ENCODE measurements at regions of chr1 and their contacts with region 1.

Region 1: GRCh38 chr1:204296431-204296988 is 63.2 kb downstream of the PLEKHA6 start:
- DNase-seq: no peak

Region 2: GRCh38 chr1:204059970-204060369 is 236.5 kb before region 1 on chr1:
- intact Hi-C with region 1: no loop called
- DNase-seq: no peak

Region 3: DNA sequence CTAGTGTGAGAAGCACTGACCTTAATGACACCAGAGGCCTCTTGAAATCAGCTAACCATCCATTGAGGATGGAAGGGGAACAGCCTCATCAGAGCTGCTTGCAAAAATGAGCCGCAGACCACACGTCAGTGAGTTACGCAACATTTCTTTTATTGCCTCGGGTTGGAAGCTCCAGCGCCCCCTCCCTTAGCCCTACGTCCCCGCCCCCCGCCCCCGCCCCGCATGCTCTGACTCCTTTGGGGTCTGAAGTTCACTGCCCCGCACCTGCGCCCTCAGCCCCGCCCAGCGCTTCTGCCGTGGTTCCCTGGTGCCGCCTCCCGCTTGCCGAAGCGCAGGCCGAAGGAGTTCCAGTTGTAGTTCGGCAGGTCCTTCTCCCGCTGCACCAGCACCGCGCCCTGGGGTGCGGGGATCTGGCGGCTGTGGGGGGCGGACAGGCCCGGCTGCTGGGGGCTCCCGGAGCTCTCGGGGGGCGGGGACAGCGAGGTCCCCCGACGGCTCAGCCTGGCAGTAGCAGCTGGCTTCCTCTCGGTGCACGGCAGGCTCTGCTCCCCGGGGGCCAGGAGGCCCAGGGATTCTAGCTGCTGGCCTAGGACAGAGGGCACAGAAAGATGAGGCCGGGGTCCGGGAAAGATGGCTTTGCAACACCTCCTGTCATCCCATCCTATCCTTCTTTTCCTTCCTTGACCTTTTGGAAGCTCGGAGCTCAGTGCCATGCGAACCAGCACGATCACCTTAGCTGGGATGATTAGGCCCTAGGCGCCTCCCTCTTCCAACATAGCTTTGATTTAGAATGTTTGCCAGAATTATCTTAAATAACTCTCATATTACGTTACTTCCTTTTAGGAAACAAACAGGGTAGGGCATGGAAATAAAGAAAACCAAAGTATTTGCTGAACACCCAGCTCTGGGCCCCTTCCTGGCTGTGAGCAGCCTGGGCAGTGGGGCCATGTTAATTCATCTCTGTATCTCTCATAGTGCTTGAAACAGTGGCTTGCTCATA is 106.0 kb before region 1 on chr1:
- intact Hi-C with region 1: no loop called
- DNase-seq: no peak

Region 4: GRCh38 chr1:204257954-204258752 is 38.4 kb before region 1 on chr1:
- intact Hi-C with region 1: loop called in 1 of 2 experiments (anchors 5 kb)
- DNase-seq: no peak

Region 5: DNA sequence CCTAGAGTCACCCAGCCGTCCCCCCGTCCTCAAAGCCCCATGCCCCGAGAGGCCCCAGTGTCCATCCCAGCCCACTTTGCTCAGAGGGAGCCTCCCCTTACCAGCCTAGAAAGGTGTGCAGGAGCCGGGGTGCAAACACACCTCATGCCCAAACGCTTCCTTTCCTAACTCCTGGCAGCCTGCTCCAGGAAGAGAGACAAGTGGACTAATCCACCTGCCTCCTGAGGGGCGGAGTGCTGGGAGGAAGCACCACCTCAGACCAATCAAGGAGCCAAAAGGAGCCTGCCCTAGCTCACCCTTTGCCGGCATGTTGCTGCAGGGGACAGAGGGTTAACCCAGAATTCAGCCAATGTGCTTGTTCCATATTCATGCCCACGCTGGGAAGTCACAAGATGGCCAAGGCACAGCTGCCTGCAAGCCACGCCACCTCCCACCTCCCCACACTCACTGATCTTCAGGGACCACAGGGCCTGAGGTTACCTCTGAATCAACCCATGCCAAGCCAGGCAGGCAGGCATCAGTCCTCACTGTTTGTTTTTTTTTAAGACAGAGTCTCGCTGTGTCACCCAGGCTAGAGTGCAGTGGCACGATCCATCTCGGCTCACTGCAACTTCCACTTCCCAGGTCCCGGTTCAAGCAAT is 35.5 kb after region 1 on chr1:
- intact Hi-C with region 1: loop called in 1 of 2 experiments (anchors 5 kb)
- DNase-seq: no peak

Region 6: DNA sequence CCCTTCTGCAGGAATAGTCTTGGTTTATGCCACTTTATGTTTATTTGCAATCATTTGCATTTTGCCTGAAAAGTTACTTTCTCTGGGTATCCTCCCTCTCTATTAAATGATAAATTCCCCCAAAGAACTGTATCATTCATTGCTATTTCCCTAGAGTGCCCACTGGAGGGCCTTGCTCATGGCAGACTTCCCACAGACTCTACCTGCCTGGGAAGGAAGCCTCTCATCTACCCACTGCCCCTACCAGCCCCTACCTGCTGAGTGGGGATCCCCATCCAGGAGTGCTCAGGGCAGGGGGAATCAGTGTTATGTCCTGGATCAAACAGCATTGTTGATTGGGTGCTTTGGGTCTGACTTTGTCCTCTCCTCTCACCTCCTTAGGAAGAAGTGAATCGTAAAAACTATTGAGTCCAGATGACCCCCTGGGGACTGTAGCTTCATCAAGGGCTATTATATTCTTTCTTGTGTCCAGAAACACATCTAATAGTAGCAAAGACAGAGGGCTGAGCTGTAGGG is 395.9 kb after region 1 on chr1:
- intact Hi-C with region 1: loop called in 1 of 2 experiments (anchors 5 kb)
- DNase-seq: no peak